ENCODE measurements at regions of chr11 and their contacts with region 1.

Region 1: GRCh38 chr11:126355324-126355925 is at the start of gene ST3GAL4:
- DNase-seq: peak; percentile 60
- H3K4me3 ChIP-seq: peak within 1 kb of the TSS; percentile 62 to 70
- H3K27ac ChIP-seq: peak within 1 kb of the TSS; percentile 71 to 73
- H3K4me1 ChIP-seq: no peaks in the 10 kb centered on the region
- H3K27me3 ChIP-seq: no peaks in the 10 kb centered on the region
- CTCF ChIP-seq: no peak
- POLR2A ChIP-seq: no peak
- total RNA-seq, gene ST3GAL4: 29.2 to 192 TPM

Region 2: GRCh38 chr11:126318574-126319373 is 36.7 kb before region 1 on chr11:
- intact Hi-C with region 1: loop called (anchors 5 kb)
- DNase-seq: peak; percentile 45
- H3K4me3 ChIP-seq: no peak overlapping the region
- H3K27ac ChIP-seq: peak overlapping the region; percentile 43 to 62
- H3K4me1 ChIP-seq: no peaks in the 10 kb centered on the region
- H3K27me3 ChIP-seq: no peaks in the 10 kb centered on the region
- CTCF ChIP-seq: no peak
- POLR2A ChIP-seq: no peak

Region 3: GRCh38 chr11:127027789-127028188 is 672.4 kb after region 1 on chr11:
- intact Hi-C with region 1: no loop called
- DNase-seq: no peak
- H3K4me3 ChIP-seq: no peak overlapping the region
- H3K27ac ChIP-seq: no peak overlapping the region
- H3K4me1 ChIP-seq: no peaks in the 10 kb centered on the region
- H3K27me3 ChIP-seq: no peaks in the 10 kb centered on the region
- CTCF ChIP-seq: no peak
- POLR2A ChIP-seq: no peak

Measured in prostate gland (tissue), 2 donors.